OCI-LY7 (cell line): ENCODE measurements at regions of chr2 and their contacts with region 1.

Region 1: DNA sequence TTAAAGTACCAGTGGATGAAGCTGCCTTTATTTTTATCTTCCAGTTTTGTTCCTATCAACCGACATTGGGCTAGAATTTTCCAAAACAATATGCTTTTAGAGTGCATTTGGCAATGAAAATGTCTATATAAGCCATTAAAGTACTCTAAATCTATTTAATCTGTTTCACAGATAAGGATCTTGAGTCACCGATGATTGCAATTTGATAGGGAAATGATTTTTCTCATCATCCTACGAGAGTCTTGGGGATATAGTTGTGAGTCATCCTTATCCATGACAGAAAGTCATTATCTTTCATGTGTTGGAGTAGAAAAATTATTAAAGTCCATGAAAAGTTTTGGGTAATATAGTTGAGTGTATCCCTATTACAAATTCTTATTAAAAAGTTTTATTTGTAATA is 26.1 kb downstream of the SLC39A10 start:
- DNase-seq: no peak
- H3K4me3 ChIP-seq: no peak overlapping the region
- H3K27ac ChIP-seq: no peak overlapping the region
- H3K4me1 ChIP-seq: no peaks in the 10 kb centered on the region
- CTCF ChIP-seq: no peak

Region 2: DNA sequence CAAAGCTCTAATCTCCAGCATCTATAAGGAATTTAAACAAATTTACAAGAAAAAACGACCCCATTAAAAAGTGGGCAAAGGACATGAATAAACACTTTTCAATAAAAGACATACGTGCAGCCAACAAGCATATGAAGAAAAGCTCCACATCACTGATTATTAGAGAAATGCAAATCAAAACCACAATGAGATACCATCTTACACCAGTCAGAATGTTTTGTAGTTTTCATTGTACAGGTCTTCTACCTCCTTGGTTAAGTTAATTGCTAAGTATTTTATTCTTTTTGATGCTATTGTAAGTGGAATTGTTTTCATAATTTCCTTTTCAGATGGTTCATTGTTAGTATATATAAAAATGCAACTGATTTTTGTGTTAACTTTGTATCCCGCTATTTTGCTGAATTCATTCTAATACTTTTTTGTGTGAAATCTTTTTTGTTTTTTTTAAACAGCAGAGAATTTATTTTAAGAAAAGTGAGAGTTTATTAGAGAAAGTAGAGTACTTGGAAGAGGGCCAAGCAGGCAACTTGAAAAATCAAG is 14.6 kb after region 1 on chr2:
- CTCF ChIA-PET with region 1: no interaction called
- POLR2A ChIA-PET with region 1: interaction called, 4 read pairs
- intact Hi-C with region 1: loop called (anchors 2 kb)
- DNase-seq: no peak
- H3K4me3 ChIP-seq: no peak overlapping the region
- H3K27ac ChIP-seq: no peak overlapping the region
- H3K4me1 ChIP-seq: peaks cover 6% of the 10 kb centered on the region
- CTCF ChIP-seq: no peak

Region 3: GRCh38 chr2:195838002-195838401 is 154.8 kb after region 1 on chr2:
- CTCF ChIA-PET with region 1: no interaction called
- POLR2A ChIA-PET with region 1: no interaction called
- intact Hi-C with region 1: no loop called
- DNase-seq: no peak
- H3K4me3 ChIP-seq: no peak overlapping the region
- H3K27ac ChIP-seq: no peak overlapping the region
- H3K4me1 ChIP-seq: no peaks in the 10 kb centered on the region
- CTCF ChIP-seq: no peak